ENCODE measurements at regions of chr1 and their contacts with region 1.

Region 1: GRCh38 chr1:222465211-222466041 is 82.5 kb downstream of the HHIPL2 start:
- DNase-seq: peak; percentile 89 to 97 (median 96)
- ATAC-seq: peak; percentile 95 to 98 (median 98)
- H3K4me3 ChIP-seq: peak overlapping the region in 3 of 4 donors; percentile 6 to 36 (median 31)
- H3K27ac ChIP-seq: peak overlapping the region; percentile 71 to 93 (median 89)
- H3K4me1 ChIP-seq: peaks cover 5 to 14% (median 10%) of the 10 kb centered on the region in 3 donors
- H3K27me3 ChIP-seq: no peaks in the 10 kb centered on the region
- CTCF ChIP-seq: peak; percentile 99 to 100 (median 100)

Region 2: DNA sequence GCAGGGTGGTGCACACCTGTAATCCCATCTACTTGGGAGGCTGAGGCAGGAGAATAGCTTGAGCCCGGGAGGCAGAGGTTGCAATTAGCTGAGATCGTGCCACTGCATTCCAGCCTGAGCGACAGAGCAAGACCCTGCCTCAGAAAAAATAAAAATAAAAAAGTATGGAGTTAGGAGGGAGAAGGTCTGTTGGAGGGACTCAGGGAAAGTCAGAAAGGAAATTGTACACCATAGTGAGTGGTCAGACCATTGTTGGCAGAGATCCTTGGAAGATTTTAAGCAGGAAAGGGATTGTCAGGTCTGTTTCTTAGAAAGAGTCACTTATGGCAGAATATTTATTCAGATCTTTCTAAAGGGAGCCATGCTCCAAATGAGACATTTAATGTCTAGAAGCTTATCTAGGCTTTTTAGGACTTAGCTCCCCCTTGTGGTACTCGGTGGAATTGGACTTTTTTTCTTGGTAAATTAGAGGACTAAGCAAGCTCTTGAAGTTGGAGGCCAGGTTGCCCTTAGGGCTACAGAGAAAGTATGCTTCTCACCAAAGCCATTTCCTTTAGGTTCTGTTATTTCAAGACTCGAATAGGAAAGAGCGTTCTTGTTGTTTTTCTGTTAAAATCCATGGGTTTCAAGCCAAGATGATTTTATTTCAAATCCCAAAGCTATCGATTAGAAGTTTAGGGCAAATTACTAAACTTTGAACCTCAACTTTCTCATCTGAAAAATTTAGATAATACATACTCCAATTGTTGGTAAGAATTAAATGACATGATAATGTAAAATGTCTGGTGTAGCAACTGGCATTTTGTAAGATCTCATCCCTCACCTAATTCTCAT is 169.0 kb after region 1 on chr1:
- intact Hi-C with region 1: loop called in 2 of 3 experiments (anchors 5 to 10 kb)
- DNase-seq: peak in 3 of 6 donors; percentile 50 to 71 (median 63)
- ATAC-seq: peak; percentile 74 to 99 (median 93)
- H3K4me3 ChIP-seq: no peak overlapping the region
- H3K27ac ChIP-seq: no peak overlapping the region
- H3K4me1 ChIP-seq: no peaks in the 10 kb centered on the region
- H3K27me3 ChIP-seq: no peaks in the 10 kb centered on the region
- CTCF ChIP-seq: peak; percentile 74 to 84 (median 80)

Measured in pancreas (tissue), 10 donors.